ENCODE measurements at regions of chr2 and their contacts with region 1.

Region 1: GRCh38 chr2:190088917-190089316 is 26.4 kb upstream of the MSTN start:
- DNase-seq: peak in 3 of 5 donors; percentile 34 to 44 (median 36)
- ATAC-seq: peak in 3 of 4 donors; percentile 39 to 78 (median 59)
- H3K4me3 ChIP-seq: no peak overlapping the region
- H3K27ac ChIP-seq: no peak overlapping the region
- H3K4me1 ChIP-seq: no peaks in the 10 kb centered on the region
- H3K27me3 ChIP-seq: no peaks in the 10 kb centered on the region
- CTCF ChIP-seq: peak; percentile 58 to 89 (median 74)
- POLR2A ChIP-seq: no peak

Region 2: DNA sequence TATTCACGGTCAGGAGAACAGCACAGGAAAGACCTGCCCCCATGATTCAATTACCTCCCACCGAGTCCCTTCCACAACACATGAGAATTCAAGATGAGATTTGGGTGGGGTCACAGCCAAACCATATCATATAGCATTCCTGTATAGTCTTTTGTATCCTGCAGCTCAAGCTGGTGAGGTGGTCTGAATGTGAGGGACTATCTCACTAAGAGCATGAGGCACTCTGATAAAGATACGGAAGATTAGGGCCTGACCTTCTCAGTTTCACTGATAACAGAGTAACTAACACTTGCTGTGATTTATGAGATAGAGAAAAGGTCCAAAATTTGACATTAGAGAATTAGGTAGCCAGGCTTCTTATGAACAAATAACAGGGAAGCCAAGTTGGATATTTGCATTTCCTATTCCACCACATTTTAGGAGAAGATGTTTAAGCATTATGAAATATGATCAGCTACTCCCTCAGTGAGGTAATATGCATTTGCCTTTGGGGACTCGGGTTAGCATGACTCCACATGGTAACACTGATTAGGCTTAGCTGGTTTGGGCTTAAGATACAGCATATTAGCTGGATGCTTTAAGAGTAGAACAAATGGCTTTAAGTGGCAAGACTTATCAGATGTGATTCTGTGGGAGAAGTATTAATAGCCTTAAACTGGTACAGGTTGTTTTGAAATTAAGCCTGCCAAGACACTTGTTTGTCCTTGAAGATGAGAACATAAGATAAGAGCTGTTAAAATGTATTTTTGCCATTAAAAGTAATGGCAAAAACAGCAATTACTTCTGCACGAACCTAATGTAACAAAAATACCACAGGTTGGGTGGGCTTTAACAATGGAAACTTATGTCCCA is 80.5 kb after region 1 on chr2:
- intact Hi-C with region 1: no loop called
- DNase-seq: no peak
- ATAC-seq: no peak
- H3K4me3 ChIP-seq: no peak overlapping the region
- H3K27ac ChIP-seq: peak overlapping the region in 2 of 12 donors; percentile 3 to 17
- H3K4me1 ChIP-seq: no peaks in the 10 kb centered on the region
- H3K27me3 ChIP-seq: no peaks in the 10 kb centered on the region
- CTCF ChIP-seq: no peak
- POLR2A ChIP-seq: no peak

Region 3: GRCh38 chr2:190180313-190181122 is 91.6 kb after region 1 on chr2:
- intact Hi-C with region 1: loop called in 7 of 10 experiments (anchors 2 to 10 kb)
- DNase-seq: peak; percentile 73 to 88 (median 83)
- ATAC-seq: peak; percentile 84 to 93 (median 92)
- H3K4me3 ChIP-seq: peak overlapping the region; percentile 63 to 87 (median 71)
- H3K27ac ChIP-seq: peak overlapping the region; percentile 83 to 97 (median 94)
- H3K4me1 ChIP-seq: peaks cover 0 to 50% (median 12%) of the 10 kb centered on the region in 12 donors
- H3K27me3 ChIP-seq: no peaks in the 10 kb centered on the region
- CTCF ChIP-seq: peak; percentile 30 to 67 (median 54)
- POLR2A ChIP-seq: peak in 1 of 2 donors; percentile 37

Region 4: GRCh38 chr2:190277234-190278112 is 188.6 kb after region 1 on chr2:
- intact Hi-C with region 1: loop called (anchors 1 to 5 kb)
- DNase-seq: no peak
- ATAC-seq: no peak
- H3K4me3 ChIP-seq: no peak overlapping the region
- H3K27ac ChIP-seq: no peak overlapping the region
- H3K4me1 ChIP-seq: peaks cover 0 to 4% (median 0%) of the 10 kb centered on the region in 12 donors
- H3K27me3 ChIP-seq: no peaks in the 10 kb centered on the region
- CTCF ChIP-seq: peak in 11 of 12 donors; percentile 39 to 67 (median 53)
- POLR2A ChIP-seq: no peak

Region 5: DNA sequence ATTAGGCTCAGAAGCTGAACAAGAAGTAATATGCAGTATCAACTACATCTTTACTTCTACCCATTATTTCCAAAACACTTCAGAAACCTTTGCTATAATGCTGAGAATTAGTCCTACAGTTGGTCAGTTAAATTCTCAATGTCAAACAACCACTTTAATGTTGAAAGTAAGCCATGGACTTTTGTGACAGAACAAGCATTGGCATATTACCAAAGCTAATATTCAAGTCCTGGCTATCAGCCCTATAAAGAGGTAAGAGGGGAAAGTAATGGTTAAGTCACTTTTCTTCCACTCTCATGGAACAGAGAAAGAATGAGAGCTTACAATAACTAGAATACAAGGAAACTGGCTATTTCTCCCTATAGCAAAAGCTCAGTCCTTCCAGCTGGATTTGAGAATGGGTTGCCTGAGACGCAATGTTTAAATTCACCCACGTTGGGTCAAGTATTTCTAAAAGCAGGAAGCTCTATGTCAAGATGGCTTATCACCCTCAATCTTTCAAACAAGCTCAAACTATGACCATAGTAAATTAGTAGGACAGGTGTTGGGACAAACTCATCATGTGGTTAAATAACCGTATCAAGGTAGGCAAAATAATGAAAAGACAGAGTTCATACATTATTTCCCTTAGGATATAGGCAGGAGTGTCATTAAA is 287.8 kb after region 1 on chr2:
- intact Hi-C with region 1: loop called in 8 of 10 experiments (anchors 2 to 10 kb)
- DNase-seq: no peak
- ATAC-seq: no peak
- H3K4me3 ChIP-seq: no peak overlapping the region
- H3K27ac ChIP-seq: no peak overlapping the region
- H3K4me1 ChIP-seq: no peaks in the 10 kb centered on the region
- H3K27me3 ChIP-seq: no peaks in the 10 kb centered on the region
- CTCF ChIP-seq: no peak
- POLR2A ChIP-seq: no peak

Region 6: GRCh38 chr2:190511104-190511503 is 422.2 kb after region 1 on chr2:
- intact Hi-C with region 1: loop called in 7 of 10 experiments (anchors 5 to 10 kb)
- DNase-seq: no peak
- ATAC-seq: no peak
- H3K4me3 ChIP-seq: no peak overlapping the region
- H3K27ac ChIP-seq: no peak overlapping the region
- H3K4me1 ChIP-seq: peaks cover 0 to 10% (median 0%) of the 10 kb centered on the region in 12 donors
- H3K27me3 ChIP-seq: no peaks in the 10 kb centered on the region
- CTCF ChIP-seq: peak; percentile 16 to 72 (median 58)
- POLR2A ChIP-seq: no peak

Measured in heart left ventricle (tissue), 16 donors.